ENCODE measurements at regions of chr5 and their contacts with region 1.

Region 1: GRCh38 chr5:31531888-31532710 is at the starts of genes C5orf22 and DROSHA:
- DNase-seq: peak; percentile 72 to 90 (median 88)
- ATAC-seq: peak; percentile 99
- H3K4me3 ChIP-seq: peak within 1 kb of the TSS; percentile 97
- H3K4me3 Mint-ChIP-seq: peak within 1 kb of the TSS; percentile 93 to 100 (median 98)
- H3K27ac ChIP-seq: peak within 1 kb of the TSS; percentile 89
- H3K27ac Mint-ChIP-seq: peak within 1 kb of the TSS; percentile 83 to 96 (median 90)
- H3K4me1 ChIP-seq: peaks cover 13 to 24% of the 10 kb centered on the region in 2 donors
- H3K4me1 Mint-ChIP-seq: peaks cover 29 to 85% (median 73%) of the 10 kb centered on the region in 7 donors
- H3K27me3 ChIP-seq: no peaks in the 10 kb centered on the region
- H3K27me3 Mint-ChIP-seq: no peaks in the 10 kb centered on the region
- total RNA-seq, gene C5orf22: 10.6 to 31.3 (median 30.6) TPM
- total RNA-seq, gene DROSHA: 48.5 to 92.0 (median 75.7) TPM

Region 2: DNA sequence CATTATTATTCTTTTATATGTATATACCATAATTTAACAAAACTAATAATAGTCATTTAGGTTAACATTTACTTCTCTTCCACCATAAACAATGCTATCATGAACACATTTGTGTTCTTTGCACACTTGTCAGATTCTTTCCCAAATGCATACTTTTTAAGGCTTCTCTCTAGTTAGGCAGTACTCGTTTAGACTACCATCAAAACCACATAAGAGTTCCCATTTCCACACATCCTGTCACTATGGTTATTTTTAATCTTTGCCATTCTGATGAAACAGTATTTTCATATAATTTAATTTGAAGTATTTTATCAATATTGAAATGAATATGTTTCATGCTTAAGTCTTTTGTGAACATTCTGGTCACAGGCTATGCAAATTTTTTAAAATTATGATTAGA is 15.3 kb before region 1 on chr5:
- CTCF ChIA-PET with region 1: interaction called, 3 read pairs
- POLR2A ChIA-PET with region 1: interaction called, 4 read pairs
- intact Hi-C with region 1: loop called in 1 of 2 experiments (anchors 1 kb)
- DNase-seq: no peak
- ATAC-seq: no peak
- H3K4me3 ChIP-seq: no peak overlapping the region
- H3K4me3 Mint-ChIP-seq: peak overlapping the region in 2 of 10 donors; percentile 8 to 12
- H3K27ac ChIP-seq: no peak overlapping the region
- H3K27ac Mint-ChIP-seq: peak overlapping the region in 2 of 9 donors; percentile 36 to 40
- H3K4me1 ChIP-seq: peaks cover 0 to 6% of the 10 kb centered on the region in 2 donors
- H3K4me1 Mint-ChIP-seq: peaks cover 6 to 32% (median 12%) of the 10 kb centered on the region in 7 donors
- H3K27me3 ChIP-seq: no peaks in the 10 kb centered on the region
- H3K27me3 Mint-ChIP-seq: no peaks in the 10 kb centered on the region

Region 3: DNA sequence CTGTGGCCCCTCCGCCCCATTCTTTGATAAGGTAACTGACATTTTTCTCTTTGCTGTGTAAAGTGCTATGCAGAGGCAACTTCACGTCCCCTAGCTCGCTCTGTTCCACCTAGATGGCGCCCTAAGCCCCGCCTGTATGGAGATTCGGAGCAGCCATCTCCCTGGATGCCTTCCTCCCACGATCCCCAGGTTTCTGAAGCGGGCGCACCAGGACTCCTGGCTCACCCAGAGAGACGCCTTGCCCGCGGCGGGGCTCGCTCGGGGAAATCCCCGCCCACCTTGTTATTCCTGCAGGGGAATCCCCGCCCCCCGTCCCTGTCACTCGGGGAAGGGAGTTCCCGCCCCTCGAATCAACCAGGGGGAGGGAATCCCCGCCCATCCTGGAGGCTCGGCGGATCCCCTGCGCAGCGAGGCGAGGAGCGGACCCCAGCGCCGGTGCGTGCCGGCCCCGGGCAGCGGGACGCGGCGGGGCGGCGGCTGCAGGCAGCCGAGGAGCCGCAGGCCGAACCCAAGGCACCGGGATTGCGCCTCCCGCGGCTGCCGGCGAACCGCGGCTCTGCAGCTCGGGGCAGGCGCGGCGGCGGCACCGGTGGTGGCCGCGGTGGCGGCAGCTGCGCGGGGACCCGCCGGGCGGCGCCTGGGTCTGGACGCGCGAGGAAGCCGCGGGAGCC is 106.8 kb after region 1 on chr5 and contains the start of gene PDZD2:
- CTCF ChIA-PET with region 1: no interaction called
- POLR2A ChIA-PET with region 1: no interaction called
- intact Hi-C with region 1: loop called in 1 of 2 experiments (anchors 1 kb)
- DNase-seq: peak; percentile 38 to 81 (median 60)
- ATAC-seq: peak; percentile 79
- H3K4me3 ChIP-seq: peak within 1 kb of the TSS; percentile 62
- H3K4me3 Mint-ChIP-seq: peak within 1 kb of the TSS in 9 of 10 donors; percentile 83 to 90 (median 89)
- H3K27ac ChIP-seq: peak within 1 kb of the TSS; percentile 20
- H3K27ac Mint-ChIP-seq: peak within 1 kb of the TSS in 8 of 9 donors; percentile 34 to 72 (median 55)
- H3K4me1 ChIP-seq: peaks cover 0 to 6% of the 10 kb centered on the region in 2 donors
- H3K4me1 Mint-ChIP-seq: peaks cover 0 to 20% (median 10%) of the 10 kb centered on the region in 7 donors
- H3K27me3 ChIP-seq: no peaks in the 10 kb centered on the region
- H3K27me3 Mint-ChIP-seq: peaks cover 0 to 28% (median 14%) of the 10 kb centered on the region in 5 donors
- total RNA-seq, gene PDZD2: 1.1 to 2.7 (median 1.9) TPM in 4 of 5 experiments, not detected in the other

Region 4: DNA sequence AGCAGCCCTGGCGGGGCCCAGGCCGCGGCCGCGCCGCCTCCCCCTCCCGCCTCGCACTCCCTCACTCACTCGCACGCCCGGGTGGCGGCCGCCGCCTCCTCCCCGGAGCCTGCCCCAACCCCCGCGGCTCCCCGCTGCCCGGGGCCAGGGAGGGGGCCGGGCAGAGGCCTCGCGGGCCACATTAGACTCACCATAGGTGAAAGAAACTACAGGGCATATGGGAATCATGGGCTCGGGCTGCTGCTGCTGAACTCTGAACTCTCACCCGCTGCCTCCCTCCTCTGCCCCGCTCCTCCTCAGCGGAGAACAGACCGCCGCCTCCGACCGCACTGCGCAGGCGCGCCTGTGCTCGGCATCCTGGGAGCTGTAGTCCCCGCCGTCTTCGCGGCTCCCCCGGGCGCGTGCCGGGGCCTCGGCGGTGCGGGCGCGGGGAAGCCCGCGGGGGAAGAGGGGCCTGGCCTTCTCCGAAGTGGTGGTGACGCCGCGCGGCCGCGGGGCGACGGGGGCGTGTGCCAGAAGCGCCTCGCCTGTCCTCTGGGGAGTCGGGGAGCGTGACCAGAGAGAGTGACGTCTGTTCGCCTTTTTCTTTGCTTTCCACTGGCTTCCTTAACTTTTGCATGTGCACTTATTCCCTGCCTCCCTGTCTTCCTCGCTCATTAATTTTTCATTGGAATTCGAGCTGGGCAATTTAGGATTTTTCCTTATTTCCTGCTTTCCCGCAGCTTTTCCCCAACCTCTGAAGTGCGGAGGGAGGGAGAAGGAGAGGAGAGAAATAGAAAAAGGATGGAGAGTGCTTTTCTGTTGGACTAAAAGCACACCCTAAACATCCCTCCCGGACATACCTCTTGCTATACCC is 912.6 kb after region 1 on chr5 and contains the start of gene ZFR:
- CTCF ChIA-PET with region 1: no interaction called
- POLR2A ChIA-PET with region 1: interaction called, 3 read pairs
- intact Hi-C with region 1: loop called (anchors 1 to 2 kb)
- DNase-seq: peak; percentile 91 to 95 (median 93)
- ATAC-seq: peak; percentile 95
- H3K4me3 ChIP-seq: peak within 1 kb of the TSS; percentile 67
- H3K4me3 Mint-ChIP-seq: peak within 1 kb of the TSS; percentile 79 to 94 (median 92)
- H3K27ac ChIP-seq: peak within 1 kb of the TSS; percentile 93
- H3K27ac Mint-ChIP-seq: peak within 1 kb of the TSS; percentile 75 to 96 (median 93)
- H3K4me1 ChIP-seq: peaks cover 16 to 20% of the 10 kb centered on the region in 2 donors
- H3K4me1 Mint-ChIP-seq: peaks cover 24 to 38% (median 33%) of the 10 kb centered on the region in 7 donors
- H3K27me3 ChIP-seq: no peaks in the 10 kb centered on the region
- H3K27me3 Mint-ChIP-seq: peaks cover 0 to 17% (median 0%) of the 10 kb centered on the region in 5 donors
- total RNA-seq, gene ZFR: 53.4 to 59.3 (median 58.0) TPM